Right ventricle myocardium inferior (tissue), 1 donor: ENCODE measurements at regions of chr21 and their contacts with region 1.

Region 1: DNA sequence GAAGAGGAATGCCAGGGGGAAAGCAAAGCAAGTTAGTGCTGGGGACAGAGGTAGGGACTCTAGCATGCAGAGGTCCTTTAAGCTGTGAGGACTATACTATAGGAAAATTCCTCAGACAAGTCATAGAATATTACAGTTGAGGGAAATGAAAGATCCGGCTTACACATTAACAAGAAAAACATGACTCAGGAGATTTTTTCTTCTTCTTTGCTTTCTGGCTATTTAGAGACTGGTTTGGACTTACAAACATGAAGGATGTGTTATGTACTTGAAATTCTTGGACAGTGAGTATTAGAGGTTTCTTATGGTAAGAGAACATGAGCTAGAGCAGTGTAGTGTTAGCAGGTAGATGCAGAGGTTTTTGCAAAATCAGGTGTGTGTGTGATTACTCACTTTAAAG is 24.9 kb downstream of the USP25 start:
- DNase-seq: no peak
- ATAC-seq: no peak

Region 2: GRCh38 chr21:15679630-15680029 is 75.0 kb before region 1 on chr21:
- intact Hi-C with region 1: loop called (anchors 10 kb)
- DNase-seq: no peak
- ATAC-seq: no peak

Region 3: GRCh38 chr21:15722594-15723324 is 31.9 kb before region 1 on chr21:
- intact Hi-C with region 1: no loop called
- DNase-seq: no peak
- ATAC-seq: no peak